Activated CD4-positive, alpha-beta T cell treated with anti-CD3 and anti-CD28 coated beads, Interleukin-2, amount 10 ng/mL, durations not matched to agents 24 days and 14 days (primary cell): ENCODE measurements at regions of chr4 and their contacts with region 1.

Region 1: GRCh38 chr4:87235020-87235671 is 14.7 kb upstream of the KLHL8 start:
- DNase-seq: no peak
- H3K4me3 Mint-ChIP-seq: peak overlapping the region; percentile 72
- H3K27ac Mint-ChIP-seq: no peak overlapping the region
- H3K4me1 Mint-ChIP-seq: peaks cover 3% of the 10 kb centered on the region
- H3K27me3 Mint-ChIP-seq: peaks cover 21% of the 10 kb centered on the region

Region 2: GRCh38 chr4:86921608-86922252 is 313.4 kb before region 1 on chr4:
- intact Hi-C with region 1: loop called (anchors 1 kb)
- DNase-seq: no peak
- H3K4me3 Mint-ChIP-seq: no peak overlapping the region
- H3K27ac Mint-ChIP-seq: no peak overlapping the region
- H3K4me1 Mint-ChIP-seq: peaks cover 3% of the 10 kb centered on the region
- H3K27me3 Mint-ChIP-seq: no peaks in the 10 kb centered on the region

Region 3: DNA sequence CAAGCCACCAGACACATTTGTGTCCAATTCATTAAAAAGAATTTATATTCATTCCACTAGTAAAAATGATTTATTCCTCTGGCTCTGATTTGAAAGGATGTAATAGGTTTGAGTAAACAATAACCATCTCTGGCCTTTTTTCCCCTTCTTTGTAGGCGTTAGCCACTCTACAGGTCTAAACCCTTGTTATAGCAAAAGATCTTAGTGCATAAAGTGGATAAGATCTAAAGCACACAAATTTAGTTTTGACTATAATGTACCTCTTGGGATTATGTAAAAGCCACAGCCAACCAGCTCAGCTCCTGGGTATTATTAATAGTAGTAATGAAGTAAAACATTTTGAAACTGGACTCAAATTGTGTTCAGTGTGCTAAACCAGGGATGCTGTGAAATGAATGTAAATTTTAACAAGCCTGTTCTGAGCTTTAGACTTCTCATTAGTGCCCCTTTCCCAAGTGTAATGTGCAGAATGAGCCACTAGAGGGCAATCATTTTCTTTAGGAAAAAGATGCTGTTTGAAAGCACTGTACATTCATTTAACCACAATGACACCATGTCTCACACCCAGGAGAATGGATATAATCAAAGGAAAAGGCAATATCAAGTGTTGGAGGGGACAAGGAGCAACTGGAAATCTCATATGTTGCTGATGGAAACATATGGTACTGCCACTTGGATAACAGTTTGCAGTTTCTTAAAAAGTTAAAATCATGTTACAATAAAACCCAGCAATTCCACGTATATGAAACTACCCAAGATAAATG is 84.5 kb before region 1 on chr4:
- intact Hi-C with region 1: loop called (anchors 1 kb)
- DNase-seq: peak; percentile 90
- H3K4me3 Mint-ChIP-seq: no peak overlapping the region
- H3K27ac Mint-ChIP-seq: no peak overlapping the region
- H3K4me1 Mint-ChIP-seq: peaks cover 3% of the 10 kb centered on the region
- H3K27me3 Mint-ChIP-seq: no peaks in the 10 kb centered on the region

Region 4: DNA sequence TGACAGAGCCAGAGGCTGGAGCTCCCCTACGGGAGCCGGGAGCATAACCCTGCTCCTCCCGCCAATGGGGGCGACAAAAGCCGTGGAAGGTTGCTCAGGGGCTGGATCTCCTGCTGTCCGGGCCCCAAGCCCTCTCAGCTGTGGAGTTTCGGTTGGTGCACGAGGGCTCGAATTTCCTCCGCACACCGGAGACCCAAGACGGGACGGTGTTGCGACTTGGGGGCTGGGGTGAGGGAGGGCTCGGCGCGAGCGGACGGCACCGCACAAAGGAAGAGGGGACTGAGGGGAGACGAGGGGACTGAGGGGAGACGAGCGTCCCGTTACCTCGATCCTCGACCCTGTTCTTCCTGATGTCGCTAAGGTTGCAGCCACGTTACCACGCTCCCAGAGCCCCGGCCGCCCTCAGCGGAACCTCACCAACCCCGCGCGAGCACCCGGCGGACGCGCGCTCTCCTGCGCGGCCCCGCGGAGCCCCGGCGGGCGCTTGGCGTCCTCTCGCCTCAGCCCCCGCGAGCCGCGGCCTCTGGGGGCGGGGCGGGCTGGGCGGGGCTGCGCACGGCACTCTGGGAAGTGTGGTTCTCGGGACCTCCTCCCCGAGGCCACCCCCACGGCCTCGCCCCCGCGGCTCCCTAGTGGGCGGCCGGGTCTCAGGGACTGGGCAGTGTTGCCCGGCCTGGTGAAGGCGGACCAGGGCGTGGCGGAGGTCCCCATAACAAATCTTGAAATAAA is 14.9 kb before region 1 on chr4 and contains the start of gene KLHL8:
- intact Hi-C with region 1: loop called (anchors 1 kb)
- DNase-seq: peak; percentile 97
- H3K4me3 Mint-ChIP-seq: peak within 1 kb of the TSS; percentile 89
- H3K27ac Mint-ChIP-seq: peak within 1 kb of the TSS; percentile 95
- H3K4me1 Mint-ChIP-seq: peaks cover 10% of the 10 kb centered on the region
- H3K27me3 Mint-ChIP-seq: peaks cover 9% of the 10 kb centered on the region
- total RNA-seq, gene KLHL8: 16.5 and 17.1 TPM in 2 replicates